A673 (cell line): ENCODE measurements at regions of chr2 and their contacts with region 1.

Region 1: DNA sequence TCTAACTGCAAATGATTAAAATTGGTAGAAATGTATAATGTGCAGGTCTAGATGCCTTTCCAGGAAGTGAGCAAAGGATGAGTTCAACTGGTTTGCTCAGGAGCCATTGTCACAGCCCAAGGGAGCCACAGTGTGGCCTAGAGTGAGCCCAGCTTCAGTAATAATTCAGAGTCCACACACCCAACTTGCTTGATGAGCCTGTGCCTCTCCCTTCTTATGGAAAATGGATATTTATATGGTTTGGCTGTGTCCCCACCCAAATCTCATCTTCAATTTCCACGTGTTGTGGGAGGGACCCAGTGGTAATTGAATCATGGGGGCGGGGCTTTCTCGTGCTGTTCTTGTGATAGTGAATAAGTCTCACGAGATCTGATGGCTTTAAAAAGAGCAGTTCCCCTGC is 92.1 kb upstream of the ASAP2 start:
- DNase-seq: no peak
- H3K4me3 ChIP-seq: no peak overlapping the region
- H3K27ac ChIP-seq: no peak overlapping the region
- H3K4me1 ChIP-seq: no peaks in the 10 kb centered on the region
- H3K27me3 ChIP-seq: no peaks in the 10 kb centered on the region
- CTCF ChIP-seq: no peak

Region 2: GRCh38 chr2:8986327-8986976 is 128.1 kb before region 1 on chr2:
- CTCF ChIA-PET with region 1: interaction called, 10 read pairs
- POLR2A ChIA-PET with region 1: no interaction called
- intact Hi-C with region 1: no loop called
- DNase-seq: peak; percentile 62
- H3K4me3 ChIP-seq: no peak overlapping the region
- H3K27ac ChIP-seq: no peak overlapping the region
- H3K4me1 ChIP-seq: peaks cover 19% of the 10 kb centered on the region
- H3K27me3 ChIP-seq: no peaks in the 10 kb centered on the region
- CTCF ChIP-seq: peak; percentile 63